Stomach (tissue), 19 donors: ENCODE measurements at regions of chr16 and their contacts with region 1.

Region 1: GRCh38 chr16:8885674-8886592 is 3.8 kb downstream of the LITAFD start:
- DNase-seq: peak in 1 of 2 donors; percentile 78
- H3K4me3 ChIP-seq: no peak overlapping the region
- H3K27ac ChIP-seq: no peak overlapping the region
- H3K4me1 ChIP-seq: peaks cover 18 to 41% (median 31%) of the 10 kb centered on the region in 4 donors
- H3K27me3 ChIP-seq: peaks cover 0 to 30% (median 0%) of the 10 kb centered on the region in 3 donors
- CTCF ChIP-seq: no peak
- EP300 ChIP-seq: no peak
- POLR2A ChIP-seq: no peak

Region 2: DNA sequence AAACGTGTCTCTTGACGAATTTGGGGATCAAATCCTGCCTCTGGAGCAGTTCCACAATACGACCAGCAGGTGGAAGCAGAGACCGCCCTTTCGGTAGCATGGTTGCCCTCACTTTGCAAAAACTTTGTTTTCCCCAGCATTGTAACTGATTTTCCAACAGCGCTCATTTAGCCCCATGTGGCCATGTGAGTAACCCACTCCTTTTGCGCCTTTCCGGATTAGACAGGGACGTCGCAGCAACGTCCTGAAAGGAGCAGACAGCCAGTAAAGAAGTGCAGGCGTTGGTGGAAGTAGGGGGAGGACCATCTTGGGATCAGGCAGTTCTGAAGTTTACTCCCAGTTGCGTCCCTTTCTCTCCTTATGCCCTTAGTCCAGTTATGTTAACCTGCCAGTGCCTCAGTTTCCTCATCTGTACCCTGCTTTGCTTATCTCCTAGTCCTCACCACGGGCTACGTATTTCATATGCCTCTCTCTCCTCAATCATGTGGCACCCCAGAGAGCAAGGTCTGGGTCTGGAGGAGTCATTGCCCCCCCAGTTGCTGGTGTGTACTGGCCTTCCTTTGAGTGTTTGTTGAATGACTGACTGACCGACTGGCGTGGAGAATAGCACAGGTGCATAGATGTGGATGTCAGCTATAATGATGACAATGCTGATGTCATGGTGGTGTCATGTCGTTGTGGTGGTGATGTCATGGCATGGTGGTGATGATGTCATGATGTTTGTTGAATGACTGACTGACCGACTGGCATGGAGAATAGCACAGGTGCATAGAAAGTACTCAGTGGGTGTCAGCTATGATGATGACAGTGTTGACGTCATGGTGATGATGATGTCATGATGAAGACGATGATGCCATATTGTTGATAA is 317.9 kb before region 1 on chr16:
- intact Hi-C with region 1: loop called (anchors 10 kb)
- DNase-seq: peak; percentile 70 to 94
- H3K4me3 ChIP-seq: no peak overlapping the region
- H3K27ac ChIP-seq: no peak overlapping the region
- H3K4me1 ChIP-seq: peaks cover 0 to 16% (median 10%) of the 10 kb centered on the region in 4 donors
- H3K27me3 ChIP-seq: peaks cover 0 to 35% (median 0%) of the 10 kb centered on the region in 3 donors
- CTCF ChIP-seq: peak in 6 of 7 experiments; percentile 48 to 99 (median 98)
- EP300 ChIP-seq: no peak
- POLR2A ChIP-seq: no peak

Region 3: DNA sequence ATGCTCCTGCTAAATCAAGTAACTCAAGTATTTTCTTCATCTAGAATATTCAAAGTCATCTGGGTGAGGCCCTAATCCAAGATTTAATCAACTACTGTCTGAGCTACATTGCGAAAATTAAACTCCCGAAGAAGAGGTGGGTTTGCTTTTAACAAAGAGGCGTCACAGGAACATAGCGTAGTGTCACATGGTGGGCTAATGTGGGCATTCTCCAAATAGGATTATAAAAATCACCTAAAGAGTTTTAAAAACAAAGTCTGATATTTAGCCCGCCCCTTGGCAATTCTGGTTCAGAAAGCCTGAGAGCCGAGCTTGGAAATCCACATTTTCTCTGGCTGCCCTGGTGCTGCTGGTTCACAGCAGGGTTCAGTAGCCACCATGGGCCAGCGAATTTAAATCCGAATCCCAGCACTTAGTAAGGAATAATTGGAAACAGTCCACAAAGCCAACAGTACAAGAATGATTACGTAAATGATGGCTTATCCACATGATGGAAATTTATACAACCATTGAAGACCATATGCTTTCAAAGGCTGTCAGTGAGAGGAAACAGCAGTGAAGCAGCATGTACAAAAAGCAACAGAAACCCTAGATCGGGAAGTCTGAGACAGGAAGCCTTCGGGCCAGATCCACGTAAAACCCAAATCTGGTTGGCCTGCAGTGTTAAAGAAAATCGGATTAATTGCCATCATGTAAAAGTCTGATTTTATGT is 79.5 kb before region 1 on chr16:
- intact Hi-C with region 1: loop called (anchors 10 kb)
- DNase-seq: no peak
- H3K4me3 ChIP-seq: no peak overlapping the region
- H3K27ac ChIP-seq: no peak overlapping the region
- H3K4me1 ChIP-seq: peaks cover 0 to 2% (median under 1%) of the 10 kb centered on the region in 4 donors
- H3K27me3 ChIP-seq: no peaks in the 10 kb centered on the region
- CTCF ChIP-seq: no peak
- EP300 ChIP-seq: no peak
- POLR2A ChIP-seq: no peak

Region 4: GRCh38 chr16:8816967-8817655 is 68.8 kb before region 1 on chr16:
- intact Hi-C with region 1: no loop called
- DNase-seq: no peak
- H3K4me3 ChIP-seq: no peak overlapping the region
- H3K27ac ChIP-seq: no peak overlapping the region
- H3K4me1 ChIP-seq: no peaks in the 10 kb centered on the region
- H3K27me3 ChIP-seq: no peaks in the 10 kb centered on the region
- CTCF ChIP-seq: no peak
- EP300 ChIP-seq: no peak
- POLR2A ChIP-seq: no peak

Region 5: DNA sequence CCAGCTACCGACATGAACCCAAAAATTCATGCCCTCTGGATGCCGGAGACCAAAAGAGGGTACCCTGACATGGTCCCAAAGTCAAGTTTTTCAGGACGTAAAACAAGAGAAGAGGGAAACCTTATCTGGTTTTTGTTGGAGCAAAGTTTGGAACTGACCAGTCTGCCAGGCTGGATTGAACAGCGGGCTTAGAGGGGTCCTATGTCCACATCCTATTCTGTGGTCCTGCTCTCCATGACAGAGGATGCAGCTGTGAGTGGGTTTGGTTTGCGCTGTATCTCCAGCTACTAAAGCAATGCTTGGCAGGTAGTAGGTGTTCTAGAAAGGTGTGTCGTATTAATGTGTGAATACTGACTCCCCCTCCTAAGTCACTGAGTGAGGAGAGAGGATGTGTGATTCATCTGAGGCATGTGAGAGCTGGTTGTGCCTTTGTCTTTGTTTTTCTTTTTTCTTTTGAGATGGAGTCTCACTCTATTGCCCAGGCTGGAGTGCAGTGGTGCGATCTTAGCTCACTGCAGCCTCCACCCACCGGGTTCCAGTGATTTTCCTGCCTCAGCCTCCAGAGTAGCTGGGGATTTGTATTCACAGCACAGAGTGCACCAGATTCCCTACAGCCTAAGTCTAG is 57.3 kb before region 1 on chr16:
- intact Hi-C with region 1: no loop called
- DNase-seq: no peak
- H3K4me3 ChIP-seq: no peak overlapping the region
- H3K27ac ChIP-seq: no peak overlapping the region
- H3K4me1 ChIP-seq: no peaks in the 10 kb centered on the region
- H3K27me3 ChIP-seq: no peaks in the 10 kb centered on the region
- CTCF ChIP-seq: no peak
- EP300 ChIP-seq: no peak
- POLR2A ChIP-seq: no peak